ENCODE measurements at regions of chr19 and their contacts with region 1.

Region 1: DNA sequence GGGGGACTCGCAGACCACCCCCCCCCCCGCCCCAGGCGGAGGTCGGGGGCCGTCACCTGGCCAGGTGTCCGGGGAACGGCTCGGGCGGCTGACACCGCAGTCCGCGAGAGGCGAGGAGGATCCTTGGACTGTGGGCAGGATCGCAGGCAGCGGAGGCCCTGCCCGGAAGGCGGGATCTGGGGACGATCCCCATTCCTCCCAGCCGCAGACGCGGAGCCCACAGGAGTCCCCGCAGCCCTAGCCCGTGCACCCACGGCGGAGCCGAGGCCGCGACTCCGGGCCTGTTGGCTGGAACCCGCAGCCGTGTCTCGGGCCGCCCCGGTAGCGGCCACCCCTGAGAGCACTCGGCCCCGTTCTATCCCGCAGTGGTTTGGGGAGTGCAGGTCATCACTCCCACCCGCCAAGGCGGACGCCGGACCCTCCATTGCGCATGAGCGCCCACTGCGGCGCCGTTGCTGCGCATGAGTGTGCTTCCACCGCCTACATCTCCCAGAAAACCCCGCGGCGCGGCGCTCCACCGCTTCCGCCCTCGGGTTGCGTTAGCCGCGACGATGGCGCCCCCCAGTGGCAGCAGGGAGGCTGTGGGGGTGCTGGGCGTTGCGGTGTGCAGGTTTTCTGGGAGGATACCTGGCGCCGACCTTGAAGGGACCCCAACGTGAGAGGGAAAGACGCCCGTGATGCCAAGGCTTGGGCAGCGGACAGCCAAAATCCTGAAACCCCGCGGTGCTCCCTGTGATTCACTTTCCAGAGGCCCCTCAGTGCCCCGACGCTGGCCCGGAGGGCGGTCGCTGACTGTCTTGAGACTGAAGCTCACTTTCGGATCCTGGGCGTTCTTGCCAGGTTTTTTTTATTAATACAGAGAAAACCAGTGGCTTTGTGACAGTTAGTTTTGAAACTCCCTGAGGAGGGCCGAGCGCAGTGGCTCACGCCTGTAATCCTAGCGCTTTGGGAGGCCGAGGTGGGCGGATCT is 4.4 kb upstream of the ZNF329 start:
- DNase-seq: peak; percentile 99
- ATAC-seq: peak; percentile 82
- H3K4me3 Mint-ChIP-seq: peak overlapping the region; percentile 82
- H3K27ac Mint-ChIP-seq: peak overlapping the region; percentile 70
- H3K4me1 Mint-ChIP-seq: peaks cover 12% of the 10 kb centered on the region
- H3K27me3 Mint-ChIP-seq: no peaks in the 10 kb centered on the region
- CTCF ChIP-seq: peak; percentile 16

Region 2: DNA sequence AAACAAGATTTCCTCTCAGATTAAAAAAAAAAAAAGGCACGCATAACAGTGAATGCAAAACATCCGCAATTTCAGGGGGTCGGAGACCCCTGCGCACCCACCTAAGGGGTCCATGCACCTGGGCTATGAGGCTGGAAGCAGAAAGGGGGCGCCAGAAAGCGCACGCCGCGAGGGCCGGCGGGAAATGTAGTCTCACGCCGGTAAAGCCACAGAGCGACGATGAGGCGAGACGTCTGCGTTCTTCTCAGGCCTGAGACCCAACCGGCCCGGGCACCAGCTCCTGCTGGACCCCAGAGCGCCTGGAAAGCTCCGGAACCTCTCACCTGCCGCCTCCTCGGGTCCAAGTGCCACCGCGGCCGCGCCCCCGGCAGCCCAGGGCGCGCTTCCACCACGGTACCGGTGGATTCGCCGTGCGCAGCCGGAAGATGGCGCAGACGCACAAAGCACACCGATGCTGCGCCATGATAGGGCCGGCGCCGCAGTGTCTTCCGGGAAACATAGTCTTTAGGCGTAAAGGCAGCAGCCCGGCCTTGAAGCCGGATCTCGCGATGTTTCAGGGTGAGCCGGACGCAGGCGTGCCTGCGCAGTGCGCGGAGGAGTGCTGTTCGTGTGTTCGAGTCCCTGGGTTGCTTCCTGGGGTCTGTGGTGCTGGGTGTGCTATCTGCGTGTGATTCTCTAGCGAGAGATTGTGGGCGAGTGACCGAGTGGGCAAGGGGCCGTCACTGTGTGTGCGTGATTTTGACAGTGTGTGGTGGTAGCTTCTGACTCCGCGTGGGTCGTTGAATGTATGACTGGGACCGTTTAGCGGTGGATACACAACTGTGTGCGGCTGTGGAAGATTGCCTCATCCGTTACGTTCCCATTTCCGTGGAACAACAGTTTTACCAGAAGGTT is 1761.6 kb before region 1 on chr19 and contains the start of gene ZNF582:
- CTCF ChIA-PET with region 1: no interaction called
- POLR2A ChIA-PET with region 1: no interaction called
- intact Hi-C with region 1: loop called (anchors 5 kb)
- DNase-seq: peak; percentile 85
- ATAC-seq: peak; percentile 96
- H3K4me3 Mint-ChIP-seq: peak within 1 kb of the TSS; percentile 97
- H3K27ac Mint-ChIP-seq: peak within 1 kb of the TSS; percentile 96
- H3K4me1 Mint-ChIP-seq: peaks cover 13% of the 10 kb centered on the region
- H3K27me3 Mint-ChIP-seq: no peaks in the 10 kb centered on the region
- CTCF ChIP-seq: no peak
- total RNA-seq, gene ZNF582: 7.4 and 7.9 TPM in 2 replicates

Region 3: GRCh38 chr19:57362997-57363705 is 791.8 kb before region 1 on chr19 and contains the starts of genes TRAPPC2B and ZNF547:
- CTCF ChIA-PET with region 1: no interaction called
- POLR2A ChIA-PET with region 1: no interaction called
- intact Hi-C with region 1: loop called (anchors 1 kb)
- DNase-seq: peak; percentile 99
- ATAC-seq: peak; percentile 94
- H3K4me3 Mint-ChIP-seq: peak within 1 kb of the TSS; percentile 92
- H3K27ac Mint-ChIP-seq: peak within 1 kb of the TSS; percentile 95
- H3K4me1 Mint-ChIP-seq: peaks cover 17% of the 10 kb centered on the region
- H3K27me3 Mint-ChIP-seq: no peaks in the 10 kb centered on the region
- CTCF ChIP-seq: no peak
- total RNA-seq, gene TRAPPC2B: 9.7 and 10.2 TPM in 2 replicates
- total RNA-seq, gene ZNF547: 6.0 and 6.3 TPM in 2 replicates

Region 4: GRCh38 chr19:57819475-57820148 is 335.4 kb before region 1 on chr19:
- CTCF ChIA-PET with region 1: no interaction called
- POLR2A ChIA-PET with region 1: interaction called, 4 read pairs
- intact Hi-C with region 1: loop called (anchors 10 kb)
- DNase-seq: peak; percentile 60
- ATAC-seq: peak; percentile 84
- H3K4me3 Mint-ChIP-seq: peak overlapping the region; percentile 98
- H3K27ac Mint-ChIP-seq: peak overlapping the region; percentile 97
- H3K4me1 Mint-ChIP-seq: peaks cover 55% of the 10 kb centered on the region
- H3K27me3 Mint-ChIP-seq: no peaks in the 10 kb centered on the region
- CTCF ChIP-seq: no peak

Region 5: GRCh38 chr19:57947208-57948134 is 207.5 kb before region 1 on chr19 and contains the start of gene ZNF256:
- CTCF ChIA-PET with region 1: no interaction called
- POLR2A ChIA-PET with region 1: no interaction called
- intact Hi-C with region 1: loop called (anchors 1 kb)
- DNase-seq: peak; percentile 83
- ATAC-seq: peak; percentile 99
- H3K4me3 Mint-ChIP-seq: peak within 1 kb of the TSS; percentile 96
- H3K27ac Mint-ChIP-seq: peak within 1 kb of the TSS; percentile 89
- H3K4me1 Mint-ChIP-seq: peaks cover 30% of the 10 kb centered on the region
- H3K27me3 Mint-ChIP-seq: no peaks in the 10 kb centered on the region
- CTCF ChIP-seq: no peak
- total RNA-seq, gene ZNF256: 16.6 and 20.2 TPM in 2 replicates

Region 6: DNA sequence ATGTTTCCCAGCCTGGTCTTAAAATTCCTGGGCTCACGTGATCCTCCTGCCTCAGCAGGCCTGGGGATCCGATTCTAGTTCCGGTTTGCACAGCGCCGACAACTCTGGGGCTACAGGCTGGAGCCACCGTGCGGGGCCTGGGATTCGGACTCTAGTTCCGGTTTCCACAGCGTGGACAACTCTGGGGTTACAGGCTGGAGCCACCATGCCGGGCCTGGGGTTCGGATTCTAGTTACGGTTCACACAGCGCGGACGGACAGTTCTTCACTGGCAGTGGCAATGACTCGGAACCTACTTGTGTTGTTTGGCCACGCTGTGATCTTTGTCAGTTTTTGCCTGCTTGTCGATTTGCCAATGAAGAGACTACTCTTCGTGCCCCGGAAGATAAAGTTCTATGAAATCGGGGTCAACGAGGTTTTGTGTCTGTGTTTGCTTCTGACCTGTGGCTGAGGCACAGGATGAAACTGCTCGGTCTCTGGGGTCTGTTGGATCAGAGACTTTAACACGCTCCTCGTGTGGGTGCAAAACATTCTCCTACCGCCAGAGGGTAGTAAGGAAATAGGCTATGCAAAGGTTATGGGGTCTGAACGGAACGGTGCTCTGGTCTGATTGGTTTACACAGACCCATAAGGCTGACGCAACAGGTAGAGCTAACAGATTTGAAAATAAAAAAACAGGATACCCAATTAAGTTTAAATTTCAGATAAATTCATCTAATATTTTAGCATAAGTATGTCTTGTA is 133.3 kb before region 1 on chr19:
- CTCF ChIA-PET with region 1: interaction called, 10 read pairs
- POLR2A ChIA-PET with region 1: interaction called, 8 read pairs
- intact Hi-C with region 1: loop called (anchors 1 kb)
- DNase-seq: no peak
- ATAC-seq: peak; percentile 100
- H3K4me3 Mint-ChIP-seq: no peak overlapping the region
- H3K27ac Mint-ChIP-seq: no peak overlapping the region
- H3K4me1 Mint-ChIP-seq: no peaks in the 10 kb centered on the region
- H3K27me3 Mint-ChIP-seq: peaks cover 4% of the 10 kb centered on the region
- CTCF ChIP-seq: no peak

Region 7: DNA sequence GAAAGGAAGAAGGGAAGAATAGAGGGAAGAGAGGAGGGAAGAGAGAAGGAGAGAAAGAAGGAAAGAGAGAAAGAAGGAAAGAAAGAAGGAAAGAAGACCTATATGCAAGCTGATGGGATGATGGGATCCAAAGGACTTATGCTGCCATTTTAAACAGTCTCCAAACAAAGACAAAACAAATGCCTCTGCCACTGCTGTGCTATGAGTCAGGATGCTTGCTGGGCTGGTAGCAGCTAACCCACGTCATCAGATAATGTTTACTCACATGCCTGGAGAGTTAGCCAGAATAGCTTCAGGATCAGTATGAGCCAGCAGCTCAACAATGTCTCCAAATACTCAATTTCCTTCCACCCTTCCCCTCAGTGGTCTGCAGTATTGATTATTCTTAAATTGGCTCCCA is 15.9 kb after region 1 on chr19:
- CTCF ChIA-PET with region 1: no interaction called
- POLR2A ChIA-PET with region 1: no interaction called
- intact Hi-C with region 1: no loop called
- DNase-seq: no peak
- ATAC-seq: no peak
- H3K4me3 Mint-ChIP-seq: no peak overlapping the region
- H3K27ac Mint-ChIP-seq: no peak overlapping the region
- H3K4me1 Mint-ChIP-seq: no peaks in the 10 kb centered on the region
- H3K27me3 Mint-ChIP-seq: peaks cover 7% of the 10 kb centered on the region
- CTCF ChIP-seq: no peak

Region 8: GRCh38 chr19:58305065-58305931 is 150.3 kb after region 1 on chr19 and contains the start of gene ERVK3-1:
- CTCF ChIA-PET with region 1: no interaction called
- POLR2A ChIA-PET with region 1: interaction called, 3 read pairs
- intact Hi-C with region 1: loop called (anchors 1 kb)
- DNase-seq: peak; percentile 89
- ATAC-seq: peak; percentile 97
- H3K4me3 Mint-ChIP-seq: peak within 1 kb of the TSS; percentile 100
- H3K27ac Mint-ChIP-seq: peak within 1 kb of the TSS; percentile 98
- H3K4me1 Mint-ChIP-seq: peaks cover 38% of the 10 kb centered on the region
- H3K27me3 Mint-ChIP-seq: no peaks in the 10 kb centered on the region
- CTCF ChIP-seq: no peak
- total RNA-seq, gene ERVK3-1: 61.4 and 74.3 TPM in 2 replicates

Measured in activated B cell treated with CpG ODN at 0.5 μM for 24 hours (primary cell).